A673 (cell line): ENCODE measurements at regions of chr1 and their contacts with region 1.

Region 1: GRCh38 chr1:210400043-210400840 is 71.5 kb downstream of the HHAT start:
- DNase-seq: peak; percentile 74
- H3K4me3 ChIP-seq: no peak overlapping the region
- H3K27ac ChIP-seq: no peak overlapping the region
- H3K4me1 ChIP-seq: no peaks in the 10 kb centered on the region
- H3K27me3 ChIP-seq: peaks cover 3% of the 10 kb centered on the region
- CTCF ChIP-seq: peak; percentile 92

Region 2: DNA sequence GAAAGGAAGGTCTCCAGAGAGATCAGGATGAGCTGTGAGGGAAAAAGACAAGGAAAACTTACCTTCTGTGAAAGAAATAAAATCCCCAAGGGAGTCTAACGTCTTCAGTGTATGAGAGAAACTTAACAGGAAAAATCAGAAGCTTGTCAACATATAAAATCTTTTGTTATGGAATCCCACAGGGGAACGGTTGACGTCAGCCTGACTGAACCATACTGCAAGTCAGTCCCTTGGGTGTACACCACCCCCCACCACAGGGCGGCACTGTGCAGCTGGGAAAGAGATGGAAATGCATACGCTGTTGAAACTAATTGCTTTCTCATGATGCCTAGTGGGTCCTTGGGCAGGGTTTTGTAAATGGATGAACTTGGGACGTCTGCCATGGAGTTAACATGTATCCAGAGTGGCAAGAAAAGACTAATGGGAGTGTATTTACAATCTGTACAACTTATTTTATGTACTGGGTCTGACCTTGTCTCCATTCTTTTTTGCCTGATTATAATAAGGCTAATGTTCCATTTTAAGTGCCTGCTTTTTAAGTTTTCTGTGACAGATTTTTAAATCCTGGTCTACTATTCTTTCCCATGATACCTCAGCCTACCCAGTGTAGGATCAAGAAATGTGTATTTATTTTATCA is 549.8 kb before region 1 on chr1:
- CTCF ChIA-PET with region 1: no interaction called
- POLR2A ChIA-PET with region 1: no interaction called
- intact Hi-C with region 1: loop called (anchors 5 kb)
- DNase-seq: peak; percentile 96
- H3K4me3 ChIP-seq: no peak overlapping the region
- H3K27ac ChIP-seq: peak overlapping the region; percentile 17
- H3K4me1 ChIP-seq: peaks cover 19% of the 10 kb centered on the region
- H3K27me3 ChIP-seq: no peaks in the 10 kb centered on the region
- CTCF ChIP-seq: peak; percentile 96

Region 3: DNA sequence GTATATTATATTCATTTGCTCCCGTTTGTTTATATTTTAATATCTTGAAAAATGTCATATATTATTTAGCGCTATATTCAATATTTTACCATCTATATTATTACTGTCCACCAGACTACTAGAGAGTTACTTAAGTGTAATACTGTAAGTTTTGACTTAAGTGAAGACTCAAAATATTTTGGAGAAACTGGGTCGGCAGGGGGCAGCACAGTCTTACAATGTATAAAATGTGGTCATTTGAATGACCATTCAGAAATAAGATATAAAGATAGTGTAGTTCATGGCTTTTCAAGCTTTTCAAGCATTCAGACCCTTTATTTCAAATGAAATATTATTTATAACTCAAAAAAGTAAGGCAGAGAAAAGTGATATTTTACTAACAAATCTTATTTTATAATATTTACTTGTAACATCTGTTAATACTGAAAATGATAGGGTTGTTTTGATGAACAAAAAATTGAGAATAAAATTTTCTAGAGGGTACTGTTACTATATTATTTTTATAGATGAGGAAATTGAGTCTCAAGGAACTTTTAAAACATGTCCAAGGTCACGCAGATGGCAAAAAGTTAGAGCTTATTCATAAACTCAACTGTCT is 256.7 kb before region 1 on chr1:
- CTCF ChIA-PET with region 1: no interaction called
- POLR2A ChIA-PET with region 1: no interaction called
- intact Hi-C with region 1: loop called (anchors 1 kb)
- DNase-seq: peak; percentile 85
- H3K4me3 ChIP-seq: no peak overlapping the region
- H3K27ac ChIP-seq: no peak overlapping the region
- H3K4me1 ChIP-seq: no peaks in the 10 kb centered on the region
- H3K27me3 ChIP-seq: no peaks in the 10 kb centered on the region
- CTCF ChIP-seq: peak; percentile 83

Region 4: GRCh38 chr1:210170220-210170619 is 230.0 kb before region 1 on chr1:
- CTCF ChIA-PET with region 1: no interaction called
- POLR2A ChIA-PET with region 1: no interaction called
- intact Hi-C with region 1: no loop called
- DNase-seq: no peak
- H3K4me3 ChIP-seq: no peak overlapping the region
- H3K27ac ChIP-seq: no peak overlapping the region
- H3K4me1 ChIP-seq: no peaks in the 10 kb centered on the region
- H3K27me3 ChIP-seq: no peaks in the 10 kb centered on the region
- CTCF ChIP-seq: no peak

Region 5: GRCh38 chr1:210222340-210223006 is 177.8 kb before region 1 on chr1:
- CTCF ChIA-PET with region 1: interaction called, 10 read pairs
- POLR2A ChIA-PET with region 1: no interaction called
- intact Hi-C with region 1: no loop called
- DNase-seq: peak; percentile 29
- H3K4me3 ChIP-seq: no peak overlapping the region
- H3K27ac ChIP-seq: no peak overlapping the region
- H3K4me1 ChIP-seq: no peaks in the 10 kb centered on the region
- H3K27me3 ChIP-seq: peaks cover 8% of the 10 kb centered on the region
- CTCF ChIP-seq: no peak

Region 6: GRCh38 chr1:210360852-210361477 is 39.3 kb before region 1 on chr1:
- CTCF ChIA-PET with region 1: interaction called, 4 read pairs
- POLR2A ChIA-PET with region 1: no interaction called
- intact Hi-C with region 1: loop called (anchors 1 kb)
- DNase-seq: peak; percentile 68
- H3K4me3 ChIP-seq: no peak overlapping the region
- H3K27ac ChIP-seq: no peak overlapping the region
- H3K4me1 ChIP-seq: peaks cover 11% of the 10 kb centered on the region
- H3K27me3 ChIP-seq: no peaks in the 10 kb centered on the region
- CTCF ChIP-seq: peak; percentile 77

Region 7: DNA sequence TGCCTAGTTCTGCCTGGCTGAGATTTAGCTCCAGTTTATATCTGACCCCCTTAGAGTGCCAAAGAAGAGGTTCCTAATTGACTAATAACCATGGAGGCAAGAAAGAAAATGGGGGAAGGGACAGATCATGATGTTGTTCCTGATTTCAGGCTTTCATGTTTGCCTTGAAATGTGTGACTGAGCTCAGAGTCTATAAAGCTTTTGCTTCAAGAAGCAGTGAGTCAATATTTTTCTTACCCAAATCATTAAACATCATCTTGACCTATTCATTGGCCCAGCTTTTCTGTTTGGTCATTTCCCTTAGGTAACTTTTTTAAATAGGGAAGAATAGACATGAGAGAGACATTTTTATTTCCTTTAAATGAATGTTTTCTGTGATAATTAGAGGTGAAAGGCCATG is 15.6 kb before region 1 on chr1:
- CTCF ChIA-PET with region 1: no interaction called
- POLR2A ChIA-PET with region 1: no interaction called
- intact Hi-C with region 1: no loop called
- DNase-seq: no peak
- H3K4me3 ChIP-seq: no peak overlapping the region
- H3K27ac ChIP-seq: no peak overlapping the region
- H3K4me1 ChIP-seq: no peaks in the 10 kb centered on the region
- H3K27me3 ChIP-seq: no peaks in the 10 kb centered on the region
- CTCF ChIP-seq: no peak